Vagina (tissue), 2 donors: ENCODE measurements at regions of chr11 and their contacts with region 1.

Region 1: GRCh38 chr11:65988791-65989592 is 13.0 kb downstream of the EIF1AD start:
- DNase-seq: peak in 1 of 2 donors; percentile 94
- H3K4me3 ChIP-seq: no peak overlapping the region
- H3K27ac ChIP-seq: no peak overlapping the region
- H3K4me1 ChIP-seq: no peaks in the 10 kb centered on the region
- H3K27me3 ChIP-seq: no peaks in the 10 kb centered on the region
- CTCF ChIP-seq: peak; percentile 87 to 99 (median 98)
- POLR2A ChIP-seq: no peak

Region 2: GRCh38 chr11:65700391-65700790 is 288.6 kb before region 1 on chr11:
- intact Hi-C with region 1: loop called (anchors 10 kb)
- DNase-seq: no peak
- H3K4me3 ChIP-seq: no peak overlapping the region
- H3K27ac ChIP-seq: no peak overlapping the region
- H3K4me1 ChIP-seq: no peaks in the 10 kb centered on the region
- H3K27me3 ChIP-seq: no peaks in the 10 kb centered on the region
- CTCF ChIP-seq: no peak
- POLR2A ChIP-seq: no peak

Region 3: GRCh38 chr11:65720237-65720934 is 268.6 kb before region 1 on chr11 and contains the start of gene RNASEH2C:
- intact Hi-C with region 1: no loop called
- DNase-seq: no peak
- H3K4me3 ChIP-seq: peak within 1 kb of the TSS; percentile 63 to 68
- H3K27ac ChIP-seq: peak within 1 kb of the TSS; percentile 93
- H3K4me1 ChIP-seq: peaks cover 25% of the 10 kb centered on the region
- H3K27me3 ChIP-seq: no peaks in the 10 kb centered on the region
- CTCF ChIP-seq: no peak
- POLR2A ChIP-seq: peak in 1 of 2 donors; percentile 52
- total RNA-seq, gene RNASEH2C: 66.8 TPM